ENCODE measurements at regions of chr1 and their contacts with region 1.

Region 1: DNA sequence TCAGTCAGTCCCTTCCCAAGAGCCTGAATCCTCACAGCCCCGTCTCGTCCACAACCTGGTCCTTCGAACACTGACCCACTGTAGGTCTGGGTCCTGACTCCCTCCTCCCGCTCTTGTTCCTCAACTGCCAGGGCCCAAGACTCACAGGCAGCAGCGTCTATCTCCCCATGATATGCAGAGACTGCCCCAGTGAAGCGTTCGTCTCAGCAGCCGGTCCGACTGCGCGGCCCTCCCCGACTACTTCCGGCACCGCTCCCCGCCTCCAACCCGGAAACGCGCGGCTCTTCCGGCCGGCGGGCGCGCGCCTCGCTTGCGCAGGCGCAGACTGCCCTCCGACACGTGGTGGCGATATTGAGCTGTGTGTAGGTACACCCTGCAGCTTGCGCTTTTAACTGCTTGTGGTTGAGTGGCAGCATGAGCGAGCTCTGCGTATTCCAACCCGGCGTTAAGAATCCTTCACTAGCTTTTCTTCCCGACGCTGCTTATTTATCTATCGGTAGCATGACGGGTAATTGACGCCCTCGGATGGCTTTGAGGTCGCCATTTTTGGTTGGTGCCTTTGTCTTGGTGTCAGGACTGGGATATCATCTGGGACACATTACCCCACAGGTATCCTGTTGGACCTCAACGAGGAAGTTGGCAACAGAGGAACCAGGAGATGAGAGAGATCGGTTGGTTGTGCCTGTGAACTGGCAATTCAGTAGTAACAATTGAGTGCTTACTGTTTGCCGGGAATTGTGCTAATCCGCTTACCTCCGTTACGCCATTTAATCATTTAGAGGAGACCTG is at the start of gene TAF12:
- DNase-seq: peak; percentile 81 to 92 (median 86)
- ATAC-seq: peak; percentile 91
- H3K4me3 ChIP-seq: peak within 1 kb of the TSS; percentile 93
- H3K4me3 Mint-ChIP-seq: peak within 1 kb of the TSS; percentile 94 to 100 (median 98)
- H3K27ac ChIP-seq: peak within 1 kb of the TSS; percentile 95
- H3K27ac Mint-ChIP-seq: peak within 1 kb of the TSS; percentile 93 to 99 (median 99)
- H3K4me1 ChIP-seq: peaks cover 26 to 35% of the 10 kb centered on the region in 2 donors
- H3K4me1 Mint-ChIP-seq: peaks cover 30 to 65% (median 55%) of the 10 kb centered on the region in 7 donors
- H3K27me3 ChIP-seq: no peaks in the 10 kb centered on the region
- H3K27me3 Mint-ChIP-seq: peaks cover 0 to 2% (median 0%) of the 10 kb centered on the region in 5 donors
- total RNA-seq, gene TAF12: 13.0 to 34.6 (median 19.3) TPM

Region 2: DNA sequence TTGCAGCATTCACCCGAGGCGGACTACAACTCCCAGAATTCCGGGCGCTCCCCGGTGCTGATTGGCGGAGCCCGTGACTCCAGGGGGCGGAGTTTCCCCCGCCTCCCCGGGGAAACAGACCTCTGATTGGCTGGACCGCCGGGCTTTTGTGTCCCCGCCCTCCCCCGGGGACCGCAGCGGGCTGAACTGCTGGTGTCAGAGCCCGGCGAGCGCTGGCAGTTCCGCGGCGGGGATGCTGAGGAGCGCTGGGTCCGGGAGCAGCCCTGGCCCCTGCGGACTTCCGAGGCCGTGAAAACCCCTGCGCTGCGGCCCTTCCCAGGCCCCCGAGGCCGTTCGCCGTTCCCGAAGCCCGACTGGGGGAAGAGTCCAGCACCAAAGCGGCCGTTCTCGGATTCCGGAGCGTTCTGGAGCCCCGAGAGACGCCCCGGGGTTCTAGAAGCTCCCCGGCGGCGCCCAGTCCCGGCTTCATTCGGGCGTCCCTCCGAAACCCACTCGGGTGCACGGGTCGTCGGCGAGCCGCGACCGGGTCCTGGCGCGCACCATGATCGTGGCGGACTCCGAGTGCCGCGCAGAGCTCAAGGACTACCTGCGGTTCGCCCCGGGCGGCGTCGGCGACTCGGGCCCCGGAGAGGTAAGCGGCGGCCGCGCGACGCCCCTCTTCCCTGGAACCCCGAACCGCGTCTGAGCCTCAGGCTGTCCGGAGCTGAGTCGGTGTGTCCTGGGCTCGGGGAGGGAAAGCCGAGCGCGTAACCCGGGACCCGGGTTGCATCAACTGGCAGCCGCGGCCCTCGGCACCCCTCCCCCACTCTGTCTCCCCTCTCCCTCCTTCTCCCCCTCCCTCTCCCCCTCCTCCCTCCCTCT is 383.5 kb before region 1 on chr1 and contains the start of gene SESN2:
- CTCF ChIA-PET with region 1: no interaction called
- POLR2A ChIA-PET with region 1: interaction called, 10 read pairs
- intact Hi-C with region 1: no loop called
- DNase-seq: peak; percentile 97 to 99 (median 99)
- ATAC-seq: peak; percentile 98
- H3K4me3 ChIP-seq: peak within 1 kb of the TSS; percentile 95
- H3K4me3 Mint-ChIP-seq: peak within 1 kb of the TSS; percentile 65 to 90 (median 82)
- H3K27ac ChIP-seq: peak within 1 kb of the TSS; percentile 77
- H3K27ac Mint-ChIP-seq: peak within 1 kb of the TSS; percentile 58 to 96 (median 74)
- H3K4me1 ChIP-seq: peaks cover 38 to 47% of the 10 kb centered on the region in 2 donors
- H3K4me1 Mint-ChIP-seq: peaks cover 32 to 54% (median 49%) of the 10 kb centered on the region in 7 donors
- H3K27me3 ChIP-seq: no peaks in the 10 kb centered on the region
- H3K27me3 Mint-ChIP-seq: peaks cover 0 to 2% (median 0%) of the 10 kb centered on the region in 5 donors
- total RNA-seq, gene SESN2: 4.5 to 50.7 (median 11.8) TPM

Region 3: DNA sequence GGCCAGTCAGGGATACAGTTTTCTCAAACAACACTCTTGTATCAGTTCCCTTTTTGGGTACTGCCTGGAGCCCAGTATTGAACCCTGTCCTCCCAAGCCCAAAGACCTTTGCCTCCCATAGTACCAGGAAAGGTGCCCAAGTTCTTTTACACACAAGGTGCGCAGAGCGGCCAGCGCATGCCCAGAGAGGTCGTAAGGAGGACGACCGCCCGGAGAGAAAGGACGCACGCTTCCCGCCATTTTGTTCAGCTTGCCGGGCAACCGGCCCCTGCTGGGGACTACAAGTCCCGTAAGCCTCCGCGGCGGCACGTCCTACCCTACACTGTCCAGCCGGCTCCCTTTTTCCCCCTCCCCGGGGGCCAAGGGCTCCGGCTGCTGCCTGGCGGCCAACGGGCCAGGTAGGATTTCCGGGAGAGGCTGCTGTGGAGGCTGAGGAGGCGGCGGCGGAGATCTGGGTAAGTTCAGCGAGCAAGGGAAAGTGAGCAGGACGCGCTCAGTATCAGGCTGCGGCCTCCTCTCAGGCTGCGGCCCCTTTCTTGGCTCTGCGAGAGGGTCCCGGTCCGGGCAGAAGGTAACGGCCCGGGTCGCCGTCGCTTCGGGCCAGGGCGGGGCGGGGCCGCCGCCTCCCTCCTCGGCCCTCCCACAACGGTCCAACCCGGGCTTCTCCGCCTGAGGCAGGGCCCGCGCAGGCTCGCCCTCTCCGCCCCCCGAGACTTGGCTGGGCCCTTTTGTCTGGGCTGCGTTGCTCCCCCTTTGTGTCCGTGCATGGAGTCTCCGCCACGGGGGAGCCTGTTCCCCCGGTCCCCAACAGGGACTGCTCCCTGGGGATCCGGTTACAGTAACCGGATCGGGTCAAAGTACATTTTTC is 273.4 kb before region 1 on chr1 and contains the start of gene PHACTR4:
- CTCF ChIA-PET with region 1: no interaction called
- POLR2A ChIA-PET with region 1: interaction called, 3 read pairs
- intact Hi-C with region 1: loop called in 1 of 2 experiments (anchors 5 kb)
- DNase-seq: peak; percentile 54 to 81 (median 66)
- ATAC-seq: peak; percentile 96
- H3K4me3 ChIP-seq: peak within 1 kb of the TSS; percentile 74
- H3K4me3 Mint-ChIP-seq: peak within 1 kb of the TSS; percentile 82 to 98 (median 94)
- H3K27ac ChIP-seq: peak within 1 kb of the TSS; percentile 79
- H3K27ac Mint-ChIP-seq: peak within 1 kb of the TSS; percentile 88 to 99 (median 91)
- H3K4me1 ChIP-seq: peaks cover 10 to 11% of the 10 kb centered on the region in 2 donors
- H3K4me1 Mint-ChIP-seq: peaks cover 11 to 40% (median 35%) of the 10 kb centered on the region in 7 donors
- H3K27me3 ChIP-seq: no peaks in the 10 kb centered on the region
- H3K27me3 Mint-ChIP-seq: peaks cover 0 to 2% (median 0%) of the 10 kb centered on the region in 5 donors
- total RNA-seq, gene PHACTR4: 19.8 to 29.0 (median 25.7) TPM

Region 4: DNA sequence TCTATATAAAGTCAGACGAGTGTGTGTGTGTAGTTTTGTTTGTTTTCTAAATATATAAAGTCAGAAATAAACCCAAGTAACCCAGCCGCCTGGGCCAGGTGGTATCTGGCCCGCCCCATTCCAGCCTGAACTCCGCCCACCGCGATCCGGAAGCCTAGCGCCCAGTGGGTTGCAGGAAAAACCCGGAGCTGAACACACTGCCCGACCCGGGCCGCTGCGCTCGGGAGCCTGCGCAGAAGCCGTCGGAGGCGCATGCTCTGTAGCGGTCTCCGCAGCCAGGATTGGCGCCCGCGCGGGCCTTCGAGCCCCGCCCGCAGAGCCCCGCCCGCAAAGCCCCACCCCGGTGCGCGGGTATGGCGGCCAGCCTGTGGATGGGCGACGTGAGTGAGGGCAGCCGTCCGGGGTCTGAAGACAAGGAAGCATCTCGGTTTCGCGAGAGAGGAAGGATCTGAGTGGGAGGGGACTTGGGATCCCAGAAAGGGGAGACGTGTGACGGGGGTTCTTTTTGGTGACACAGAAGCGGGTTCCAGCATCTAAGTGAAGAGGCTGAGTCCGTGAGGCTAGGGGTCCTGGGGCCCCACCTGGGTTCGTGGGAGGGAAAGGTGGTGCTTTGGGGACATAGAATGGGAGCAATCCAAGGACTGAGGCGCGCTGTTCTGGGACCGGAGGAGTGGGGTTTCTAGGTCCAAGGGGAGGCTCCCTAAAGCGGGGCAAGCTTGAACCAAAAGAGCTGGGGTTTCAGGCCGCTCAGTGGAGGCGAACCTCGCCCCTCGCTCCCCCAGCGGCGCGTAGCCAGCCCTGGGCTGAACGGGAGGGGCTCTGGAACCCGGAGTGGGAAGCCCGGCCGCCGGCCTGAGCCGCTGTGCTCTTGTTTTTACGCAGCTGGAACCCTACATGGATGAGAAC is 90.0 kb before region 1 on chr1 and contains the start of gene TRNAU1AP:
- CTCF ChIA-PET with region 1: no interaction called
- POLR2A ChIA-PET with region 1: interaction called, 8 read pairs
- intact Hi-C with region 1: loop called in 1 of 2 experiments (anchors 1 kb)
- DNase-seq: peak; percentile 92 to 98 (median 97)
- ATAC-seq: peak; percentile 98
- H3K4me3 ChIP-seq: peak within 1 kb of the TSS; percentile 95
- H3K4me3 Mint-ChIP-seq: peak within 1 kb of the TSS; percentile 94 to 99 (median 98)
- H3K27ac ChIP-seq: peak within 1 kb of the TSS; percentile 81
- H3K27ac Mint-ChIP-seq: peak within 1 kb of the TSS; percentile 94 to 99 (median 98)
- H3K4me1 ChIP-seq: peaks cover 0 to 15% of the 10 kb centered on the region in 2 donors
- H3K4me1 Mint-ChIP-seq: peaks cover 10 to 26% (median 19%) of the 10 kb centered on the region in 7 donors
- H3K27me3 ChIP-seq: no peaks in the 10 kb centered on the region
- H3K27me3 Mint-ChIP-seq: no peaks in the 10 kb centered on the region
- total RNA-seq, gene TRNAU1AP: 27.6 to 52.5 (median 40.9) TPM

Region 5: DNA sequence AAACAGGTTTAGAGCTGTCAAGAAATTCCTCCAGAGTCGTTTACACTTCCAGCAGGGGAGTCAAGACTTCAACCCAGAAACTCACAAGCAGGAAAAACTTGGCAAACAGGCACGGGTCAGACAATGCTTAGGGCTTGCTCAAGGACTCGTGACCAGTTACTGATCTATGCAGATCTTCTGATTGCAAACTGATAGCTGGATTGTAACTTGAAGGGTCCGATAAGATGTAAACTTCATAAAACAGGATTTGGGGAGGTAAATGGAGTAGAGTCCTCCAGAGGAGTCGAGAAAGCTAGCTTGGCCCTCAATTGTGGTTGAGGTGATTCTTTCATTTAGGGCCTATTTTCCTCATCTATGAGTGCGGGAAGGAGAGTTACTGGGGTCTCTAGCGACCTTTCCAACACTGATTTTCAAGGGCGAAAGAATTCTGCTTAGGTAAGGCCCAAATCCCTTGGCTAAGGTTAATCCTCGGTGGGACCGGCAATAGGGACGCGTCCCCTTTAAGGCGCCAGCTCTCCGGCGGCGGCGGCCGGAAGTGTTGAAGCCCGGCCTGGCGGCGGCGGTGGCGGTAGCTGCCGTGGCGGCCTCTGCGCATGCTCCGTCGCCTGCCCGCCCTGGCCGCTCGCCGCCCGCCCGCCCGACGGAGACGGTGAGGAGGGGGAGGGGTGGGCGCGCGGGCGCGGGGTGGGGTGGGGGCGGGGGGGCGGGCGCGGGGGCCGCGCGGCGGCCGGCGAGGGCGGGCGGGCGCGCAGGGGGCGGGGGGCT is 25.3 kb after region 1 on chr1 and contains the start of gene GMEB1:
- CTCF ChIA-PET with region 1: interaction called, 6 read pairs
- POLR2A ChIA-PET with region 1: interaction called, 383 read pairs
- intact Hi-C with region 1: loop called (anchors 1 kb)
- DNase-seq: peak; percentile 70 to 91 (median 82)
- ATAC-seq: peak; percentile 81
- H3K4me3 ChIP-seq: peak within 1 kb of the TSS; percentile 81
- H3K4me3 Mint-ChIP-seq: peak within 1 kb of the TSS; percentile 89 to 97 (median 94)
- H3K27ac ChIP-seq: peak within 1 kb of the TSS; percentile 98
- H3K27ac Mint-ChIP-seq: peak within 1 kb of the TSS; percentile 94 to 100 (median 98)
- H3K4me1 ChIP-seq: peaks cover 3 to 6% of the 10 kb centered on the region in 2 donors
- H3K4me1 Mint-ChIP-seq: peaks cover 11 to 37% (median 25%) of the 10 kb centered on the region in 7 donors
- H3K27me3 ChIP-seq: no peaks in the 10 kb centered on the region
- H3K27me3 Mint-ChIP-seq: no peaks in the 10 kb centered on the region
- total RNA-seq, gene GMEB1: 15.8 to 26.7 (median 18.4) TPM

Region 6: DNA sequence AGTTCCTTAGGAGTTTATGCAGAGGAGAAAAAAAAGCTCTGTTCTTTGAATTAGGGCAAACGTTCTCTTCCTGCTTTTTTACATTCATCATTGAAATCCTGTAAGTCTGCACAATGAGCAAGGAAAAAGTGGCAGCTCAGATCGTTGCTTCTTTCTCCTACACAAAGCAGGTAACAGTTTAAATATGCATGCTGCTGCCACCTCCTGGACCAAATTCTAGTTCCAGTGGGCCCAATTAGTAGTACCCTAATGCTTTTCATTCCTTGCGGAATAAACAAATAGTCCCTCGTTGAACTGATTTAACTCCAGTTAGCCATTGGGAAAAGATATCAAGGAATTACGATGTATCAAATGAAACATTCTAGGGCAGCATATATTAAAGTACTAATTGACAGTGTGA is 113.8 kb after region 1 on chr1:
- CTCF ChIA-PET with region 1: no interaction called
- POLR2A ChIA-PET with region 1: interaction called, 10 read pairs
- intact Hi-C with region 1: loop called in 1 of 2 experiments (anchors 1 kb)
- DNase-seq: peak in 3 of 9 donors; percentile 5 to 12 (median 12)
- ATAC-seq: no peak
- H3K4me3 ChIP-seq: no peak overlapping the region
- H3K4me3 Mint-ChIP-seq: peak overlapping the region in 1 of 10 donors; percentile 10
- H3K27ac ChIP-seq: no peak overlapping the region
- H3K27ac Mint-ChIP-seq: peak overlapping the region in 4 of 9 donors; percentile 2 to 76 (median 74)
- H3K4me1 ChIP-seq: peaks cover 8 to 35% of the 10 kb centered on the region in 2 donors
- H3K4me1 Mint-ChIP-seq: peaks cover 5 to 29% (median 21%) of the 10 kb centered on the region in 7 donors
- H3K27me3 ChIP-seq: no peaks in the 10 kb centered on the region
- H3K27me3 Mint-ChIP-seq: no peaks in the 10 kb centered on the region

Region 7: GRCh38 chr1:28877132-28877781 is 234.2 kb after region 1 on chr1:
- CTCF ChIA-PET with region 1: interaction called, 20 read pairs
- POLR2A ChIA-PET with region 1: interaction called, 6 read pairs
- intact Hi-C with region 1: loop called in 1 of 2 experiments (anchors 1 kb)
- DNase-seq: peak; percentile 48 to 77 (median 67)
- ATAC-seq: peak; percentile 86
- H3K4me3 ChIP-seq: no peak overlapping the region
- H3K4me3 Mint-ChIP-seq: peak overlapping the region in 1 of 10 donors; percentile 32
- H3K27ac ChIP-seq: no peak overlapping the region
- H3K27ac Mint-ChIP-seq: no peak overlapping the region
- H3K4me1 ChIP-seq: no peaks in the 10 kb centered on the region
- H3K4me1 Mint-ChIP-seq: peaks cover 4 to 16% (median 7%) of the 10 kb centered on the region in 7 donors
- H3K27me3 ChIP-seq: no peaks in the 10 kb centered on the region
- H3K27me3 Mint-ChIP-seq: peaks cover 0 to 17% (median 5%) of the 10 kb centered on the region in 5 donors

Measured in naive thymus-derived CD4-positive, alpha-beta T cell (primary cell).